ENCODE measurements at regions of chr17 and their contacts with region 1.

Region 1: DNA sequence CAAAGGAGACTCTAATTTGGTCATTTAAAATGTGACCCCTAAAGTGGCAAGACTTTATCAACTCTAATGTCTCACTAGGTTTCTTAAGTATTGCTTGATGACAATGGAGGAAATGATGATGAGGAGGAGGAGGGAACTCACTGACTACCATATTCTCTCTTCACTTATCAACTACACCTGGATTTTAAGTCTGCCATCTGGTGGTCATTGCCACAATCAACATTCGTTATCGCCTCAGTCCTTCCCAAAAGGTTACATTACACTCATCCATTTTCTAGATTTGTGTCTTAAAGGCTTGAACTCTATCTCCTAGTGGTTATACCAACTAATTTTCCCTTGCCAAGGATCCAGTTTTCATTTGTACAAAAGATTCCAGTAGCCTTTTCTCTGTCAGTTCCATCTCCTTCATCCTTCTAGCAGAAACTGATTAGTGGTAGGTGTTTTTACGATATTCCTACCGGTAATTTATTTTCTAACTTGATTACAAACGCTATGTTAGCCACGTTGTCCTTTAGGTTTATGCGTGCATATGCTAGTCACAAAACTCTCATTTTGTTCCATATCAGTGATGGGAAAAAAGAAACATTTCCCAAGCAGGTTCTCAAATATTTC is 114.6 kb upstream of the NOG start:
- DNase-seq: peak in 1 of 2 experiments; percentile 43
- H3K4me3 ChIP-seq: no peak overlapping the region
- H3K4me3 Mint-ChIP-seq: no peak overlapping the region
- H3K27ac Mint-ChIP-seq: no peak overlapping the region
- H3K4me1 ChIP-seq: no peaks in the 10 kb centered on the region
- H3K4me1 Mint-ChIP-seq: no peaks in the 10 kb centered on the region
- H3K27me3 ChIP-seq: no peaks in the 10 kb centered on the region
- H3K27me3 Mint-ChIP-seq: peaks cover 5% of the 10 kb centered on the region
- CTCF ChIP-seq: peak; percentile 65 to 74

Region 2: DNA sequence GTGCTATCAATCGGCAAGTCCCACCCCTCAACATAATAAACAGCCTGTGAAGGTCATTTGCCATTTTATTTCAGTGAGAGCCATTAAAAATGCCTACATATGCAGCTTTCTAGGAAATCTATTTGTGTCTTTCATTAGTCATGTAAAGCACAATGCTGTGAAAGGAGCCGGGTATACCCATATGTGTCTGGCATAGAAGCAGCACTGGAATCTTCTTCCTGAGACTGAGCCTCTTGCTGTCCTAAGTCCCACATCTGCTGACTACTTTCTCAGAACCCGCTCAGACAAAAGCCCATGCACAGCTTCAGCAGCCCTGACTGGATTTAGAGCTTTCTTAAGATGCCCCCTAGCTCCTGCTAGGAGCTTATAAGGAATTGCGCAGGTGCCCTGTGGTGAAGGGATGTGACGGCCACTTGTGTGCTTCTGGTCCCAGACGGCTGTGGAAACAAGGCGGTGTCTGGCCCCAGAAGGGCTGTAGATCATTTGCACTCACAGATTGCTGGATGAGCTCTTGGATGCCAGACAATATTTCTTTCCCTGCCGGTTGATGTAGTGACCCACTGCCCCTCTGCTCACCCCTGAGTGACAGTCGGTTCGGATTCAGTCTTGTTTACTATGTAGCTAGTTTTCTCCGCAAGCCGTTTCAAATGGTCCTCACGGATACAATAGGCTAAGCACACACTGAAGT is 153.5 kb before region 1 on chr17:
- CTCF ChIA-PET with region 1: interaction called, 3 read pairs
- POLR2A ChIA-PET with region 1: no interaction called
- intact Hi-C with region 1: loop called (anchors 10 kb)
- DNase-seq: no peak
- H3K4me3 ChIP-seq: no peak overlapping the region
- H3K4me3 Mint-ChIP-seq: no peak overlapping the region
- H3K27ac Mint-ChIP-seq: no peak overlapping the region
- H3K4me1 ChIP-seq: no peaks in the 10 kb centered on the region
- H3K4me1 Mint-ChIP-seq: no peaks in the 10 kb centered on the region
- H3K27me3 ChIP-seq: no peaks in the 10 kb centered on the region
- H3K27me3 Mint-ChIP-seq: peaks cover 7% of the 10 kb centered on the region
- CTCF ChIP-seq: no peak

Region 3: DNA sequence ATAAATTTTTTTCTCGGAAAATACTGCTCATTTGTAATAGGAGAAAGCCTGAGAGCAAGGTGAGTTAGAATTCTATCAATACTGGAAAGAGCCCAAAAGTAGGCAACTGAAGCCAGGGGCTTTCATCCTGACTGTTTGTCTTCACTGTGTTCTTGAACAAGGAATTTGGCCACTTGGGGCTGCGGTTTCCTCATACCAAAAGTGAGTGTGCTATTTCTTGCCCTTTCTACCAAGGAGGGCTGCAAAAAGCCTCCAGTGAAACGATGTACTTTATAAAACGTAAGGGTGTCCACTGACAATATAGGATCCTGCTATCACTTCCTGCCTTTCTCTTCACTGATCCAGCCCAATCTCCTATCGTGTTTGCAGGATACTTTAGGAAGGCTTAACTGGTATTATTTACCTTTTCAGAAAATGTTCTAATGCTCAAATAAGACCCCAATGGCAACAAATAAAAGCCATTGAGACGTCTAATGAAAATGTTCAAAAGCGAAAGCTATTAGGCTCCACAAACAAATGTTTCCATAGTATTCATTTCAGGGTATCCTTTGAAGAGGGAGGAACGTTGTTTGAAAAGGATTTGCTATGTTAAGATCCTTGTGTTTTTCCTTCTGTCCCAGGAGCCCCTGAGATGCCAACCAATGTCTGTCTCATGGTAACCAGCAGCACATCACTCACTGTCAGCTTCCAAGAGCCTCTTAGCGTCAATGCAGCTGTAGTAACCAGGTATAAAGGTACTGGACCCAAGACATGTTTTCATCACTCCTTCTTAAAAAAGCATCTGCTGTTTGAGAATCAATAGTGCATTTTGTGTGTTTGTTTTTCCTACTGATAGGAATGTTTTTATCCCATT is 104.7 kb before region 1 on chr17:
- CTCF ChIA-PET with region 1: no interaction called
- POLR2A ChIA-PET with region 1: no interaction called
- intact Hi-C with region 1: loop called (anchors 10 kb)
- DNase-seq: peak in 1 of 2 experiments; percentile 38
- H3K4me3 ChIP-seq: no peak overlapping the region
- H3K4me3 Mint-ChIP-seq: no peak overlapping the region
- H3K27ac Mint-ChIP-seq: peak overlapping the region; percentile 73
- H3K4me1 ChIP-seq: peaks cover 29% of the 10 kb centered on the region
- H3K4me1 Mint-ChIP-seq: peaks cover 22% of the 10 kb centered on the region
- H3K27me3 ChIP-seq: no peaks in the 10 kb centered on the region
- H3K27me3 Mint-ChIP-seq: no peaks in the 10 kb centered on the region
- CTCF ChIP-seq: no peak

Region 4: DNA sequence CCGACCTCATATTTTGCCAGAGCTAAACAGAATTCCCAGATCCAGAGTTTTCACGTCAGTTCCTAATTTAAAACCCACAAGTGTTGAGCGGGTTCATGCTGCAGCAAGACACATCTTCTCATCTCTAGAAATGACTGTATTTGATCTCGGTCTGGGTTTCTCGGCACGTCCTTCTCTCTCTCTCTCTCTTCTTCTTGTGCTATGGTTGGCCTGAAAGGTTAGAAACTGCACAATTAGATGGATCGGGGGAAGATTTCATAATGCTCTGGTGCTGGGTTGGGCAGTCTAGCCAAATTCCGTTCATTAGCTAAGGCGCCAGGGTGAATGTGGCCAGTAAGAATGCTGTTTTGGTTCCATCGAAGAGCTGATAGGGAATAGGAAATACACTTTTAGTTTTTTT is 44.3 kb before region 1 on chr17:
- CTCF ChIA-PET with region 1: no interaction called
- POLR2A ChIA-PET with region 1: no interaction called
- intact Hi-C with region 1: loop called (anchors 5 kb)
- DNase-seq: no peak
- H3K4me3 ChIP-seq: no peak overlapping the region
- H3K4me3 Mint-ChIP-seq: no peak overlapping the region
- H3K27ac Mint-ChIP-seq: no peak overlapping the region
- H3K4me1 ChIP-seq: peaks cover 20% of the 10 kb centered on the region
- H3K4me1 Mint-ChIP-seq: peaks cover 35% of the 10 kb centered on the region
- H3K27me3 ChIP-seq: no peaks in the 10 kb centered on the region; the same call in 1 of the 2 replicates
- H3K27me3 Mint-ChIP-seq: no peaks in the 10 kb centered on the region
- CTCF ChIP-seq: no peak

Region 5: GRCh38 chr17:56528696-56529095 is 49.8 kb after region 1 on chr17:
- CTCF ChIA-PET with region 1: no interaction called
- POLR2A ChIA-PET with region 1: no interaction called
- intact Hi-C with region 1: no loop called
- DNase-seq: no peak
- H3K4me3 ChIP-seq: no peak overlapping the region
- H3K4me3 Mint-ChIP-seq: no peak overlapping the region
- H3K27ac Mint-ChIP-seq: no peak overlapping the region
- H3K4me1 ChIP-seq: no peaks in the 10 kb centered on the region
- H3K4me1 Mint-ChIP-seq: no peaks in the 10 kb centered on the region
- H3K27me3 ChIP-seq: no peaks in the 10 kb centered on the region; the same call in 1 of the 2 replicates
- H3K27me3 Mint-ChIP-seq: peaks cover 12% of the 10 kb centered on the region
- CTCF ChIP-seq: no peak

Measured in Caco-2 (cell line).